ENCODE measurements at regions of chr5 and their contacts with region 1.

Region 1: DNA sequence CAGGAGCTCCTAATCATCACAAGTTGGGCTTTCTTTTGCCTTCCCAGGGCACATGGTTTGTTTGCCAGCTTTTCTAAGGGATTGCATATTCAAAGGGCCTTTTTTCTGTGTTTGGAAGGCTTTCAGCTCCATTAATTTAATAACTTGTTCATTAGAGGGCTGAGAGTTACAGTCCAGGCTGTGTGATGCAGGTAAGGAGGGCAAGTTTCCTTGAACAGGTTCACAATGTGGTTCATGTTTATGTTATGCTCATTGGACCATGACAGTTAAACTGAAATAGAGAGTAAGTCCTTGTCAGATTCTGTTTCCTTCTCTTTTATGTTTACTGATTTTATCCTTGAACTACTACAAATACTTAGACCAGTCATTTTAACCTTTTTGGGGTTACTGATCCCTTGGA is 174.4 kb downstream of the MARCHF11 start:
- DNase-seq: no peak
- ATAC-seq: no peak
- H3K4me3 ChIP-seq: no peak overlapping the region
- H3K27ac ChIP-seq: no peak overlapping the region
- H3K4me1 ChIP-seq: peaks cover 0 to 12% (median 0%) of the 10 kb centered on the region in 9 donors
- H3K27me3 ChIP-seq: no peaks in the 10 kb centered on the region
- CTCF ChIP-seq: no peak

Region 2: DNA sequence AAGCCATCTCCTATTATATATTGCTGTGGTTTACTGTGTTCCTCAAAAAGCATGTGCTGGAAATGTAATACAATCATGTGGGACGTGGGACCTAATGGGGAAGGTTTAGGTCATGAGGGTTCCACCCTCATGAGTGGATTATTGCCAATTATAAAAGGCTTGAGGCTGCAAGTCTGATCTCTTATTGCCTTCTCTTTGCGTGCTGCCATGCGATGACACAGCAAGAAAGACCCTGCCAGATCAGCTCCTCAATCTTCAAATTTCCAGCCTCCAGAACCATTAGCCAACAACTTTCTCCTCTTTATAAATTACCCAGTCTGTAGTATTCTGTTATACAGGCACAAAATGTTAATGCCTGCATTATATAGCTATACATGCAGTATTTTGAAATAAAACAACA is 129.0 kb after region 1 on chr5:
- intact Hi-C with region 1: loop called in 2 of 10 experiments (anchors 5 kb)
- DNase-seq: no peak
- ATAC-seq: peak in 1 of 8 donors; percentile 11
- H3K4me3 ChIP-seq: no peak overlapping the region
- H3K27ac ChIP-seq: peak overlapping the region in 2 of 10 donors; percentile 35 to 56
- H3K4me1 ChIP-seq: peaks cover 0 to 4% (median 0%) of the 10 kb centered on the region in 9 donors
- H3K27me3 ChIP-seq: no peaks in the 10 kb centered on the region
- CTCF ChIP-seq: no peak

Region 3: DNA sequence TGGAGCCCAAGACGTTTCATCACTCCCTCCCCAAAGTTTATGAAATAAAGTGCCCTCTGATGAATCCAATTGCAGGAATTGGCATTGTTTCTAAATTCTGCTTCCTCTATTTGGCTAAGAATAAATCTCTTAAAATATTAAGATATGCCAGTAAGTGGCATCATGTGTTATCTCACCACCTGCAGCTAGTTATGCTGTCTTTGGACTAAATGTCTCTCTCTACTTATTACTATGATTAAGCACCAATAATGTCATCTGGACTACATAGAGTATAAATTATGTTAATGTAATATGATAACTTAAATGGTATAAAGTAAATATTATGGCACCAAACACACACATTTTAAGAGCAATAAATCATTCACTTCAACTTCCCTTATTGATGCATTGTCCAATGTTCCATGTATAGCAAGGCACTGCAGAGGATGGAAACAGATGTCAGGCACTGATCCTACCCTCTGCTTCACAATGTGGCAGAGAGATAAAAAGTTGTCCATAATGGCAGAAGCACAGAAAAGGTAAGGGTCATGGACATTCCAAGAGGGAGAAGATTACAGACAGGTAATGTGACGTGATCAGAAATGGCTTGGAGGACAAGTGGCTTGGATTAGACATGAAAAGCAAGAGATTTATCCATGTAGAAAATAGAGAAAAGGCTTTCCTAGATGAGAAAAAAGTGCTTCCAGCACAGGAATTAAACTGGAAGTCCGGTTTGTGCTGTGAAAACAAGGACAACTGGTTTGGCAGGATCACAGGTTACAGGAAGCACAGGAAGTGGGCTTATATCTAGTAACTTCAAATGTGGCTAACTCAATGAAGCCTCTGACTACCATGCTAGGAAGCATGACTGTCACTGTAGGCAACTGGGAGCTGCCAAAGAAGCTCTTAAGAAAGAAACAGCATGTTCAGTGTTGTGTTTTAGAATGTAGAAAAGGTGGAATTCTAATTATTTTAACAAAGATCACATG is 147.7 kb after region 1 on chr5:
- intact Hi-C with region 1: loop called in 2 of 10 experiments (anchors 5 to 10 kb)
- DNase-seq: no peak
- ATAC-seq: peak in 1 of 8 donors; percentile 33
- H3K4me3 ChIP-seq: peak overlapping the region in 3 of 10 donors; percentile 14 to 23 (median 18)
- H3K27ac ChIP-seq: peak overlapping the region in 7 of 10 donors; percentile 17 to 60 (median 45)
- H3K4me1 ChIP-seq: peaks cover 0 to 11% (median 0%) of the 10 kb centered on the region in 9 donors
- H3K27me3 ChIP-seq: no peaks in the 10 kb centered on the region
- CTCF ChIP-seq: no peak

Measured in heart right ventricle (tissue), 16 donors.